Heart left ventricle (tissue), 16 donors: ENCODE measurements at regions of chr7 and their contacts with region 1.

Region 1: GRCh38 chr7:100965723-100966541 is 3.4 kb upstream of the MUC12 start:
- DNase-seq: peak; percentile 49 to 84 (median 56)
- ATAC-seq: peak in 3 of 4 donors; percentile 40 to 73 (median 55)
- H3K4me3 ChIP-seq: peak overlapping the region in 10 of 12 donors; percentile 5 to 37 (median 15)
- H3K27ac ChIP-seq: no peak overlapping the region
- H3K4me1 ChIP-seq: peaks cover 0 to 16% (median 8%) of the 10 kb centered on the region in 12 donors
- H3K27me3 ChIP-seq: peaks cover 43 to 80% (median 58%) of the 10 kb centered on the region in 9 donors
- CTCF ChIP-seq: peak; percentile 48 to 79 (median 57)
- POLR2A ChIP-seq: no peak

Region 2: DNA sequence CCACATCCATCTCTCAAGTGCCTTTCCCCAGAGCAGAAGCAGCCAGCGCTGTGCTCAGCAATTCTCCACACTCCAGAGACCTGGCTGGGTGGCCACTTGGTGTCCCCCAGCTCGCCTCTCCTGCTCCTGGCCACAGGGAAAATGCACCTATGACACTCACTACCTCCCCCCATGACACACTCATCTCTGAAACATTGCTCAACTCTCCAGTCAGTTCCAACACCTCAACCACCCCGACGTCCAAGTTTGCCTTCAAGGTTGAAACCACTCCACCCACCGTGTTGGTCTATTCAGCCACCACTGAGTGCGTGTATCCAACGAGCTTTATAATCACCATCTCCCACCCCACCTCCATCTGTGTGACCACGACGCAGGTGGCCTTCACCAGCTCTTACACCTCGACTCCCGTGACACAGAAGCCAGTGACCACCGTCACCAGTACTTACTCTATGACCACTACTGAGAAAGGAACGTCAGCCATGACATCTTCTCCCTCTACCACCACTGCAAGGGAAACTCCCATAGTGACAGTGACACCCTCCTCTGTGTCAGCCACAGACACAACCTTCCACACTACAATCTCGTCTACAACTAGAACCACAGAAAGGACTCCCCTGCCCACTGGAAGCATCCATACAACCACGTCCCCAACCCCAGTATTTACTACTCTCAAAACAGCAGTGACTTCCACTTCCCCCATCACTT is 13.9 kb before region 1 on chr7:
- intact Hi-C with region 1: loop called in 1 of 10 experiments (anchors 2 kb)
- DNase-seq: no peak
- ATAC-seq: peak in 1 of 4 donors; percentile 11
- H3K4me3 ChIP-seq: no peak overlapping the region
- H3K27ac ChIP-seq: no peak overlapping the region
- H3K4me1 ChIP-seq: no peaks in the 10 kb centered on the region
- H3K27me3 ChIP-seq: peaks cover 0 to 50% (median 20%) of the 10 kb centered on the region in 9 donors
- CTCF ChIP-seq: no peak
- POLR2A ChIP-seq: no peak

Region 3: GRCh38 chr7:101017064-101017777 is 51.3 kb after region 1 on chr7:
- intact Hi-C with region 1: loop called in 1 of 10 experiments (anchors 10 kb)
- DNase-seq: peak; percentile 71 to 86 (median 79)
- ATAC-seq: peak; percentile 66 to 94 (median 90)
- H3K4me3 ChIP-seq: peak overlapping the region; percentile 5 to 62 (median 48)
- H3K27ac ChIP-seq: peak overlapping the region in 11 of 12 donors; percentile 43 to 87 (median 71)
- H3K4me1 ChIP-seq: peaks cover 0 to 14% (median 2%) of the 10 kb centered on the region in 12 donors
- H3K27me3 ChIP-seq: peaks cover 0 to 17% (median 5%) of the 10 kb centered on the region in 9 donors
- CTCF ChIP-seq: no peak
- POLR2A ChIP-seq: no peak